Common myeloid progenitor, CD34-positive (primary cell): ENCODE measurements at regions of chr19 and their contacts with region 1.

Region 1: GRCh38 chr19:33771384-33772101 is 25.1 kb upstream of the KCTD15 start:
- DNase-seq: peak; percentile 55 to 78 (median 73)
- H3K4me3 ChIP-seq: no peak overlapping the region
- H3K27ac ChIP-seq: no peak overlapping the region
- H3K4me1 ChIP-seq: no peaks in the 10 kb centered on the region
- H3K27me3 ChIP-seq: peaks cover 0 to 11% (median 5%) of the 10 kb centered on the region in 5 experiments

Region 2: GRCh38 chr19:33235269-33235995 is 536.1 kb before region 1 on chr19:
- CTCF ChIA-PET with region 1: interaction called, 12 read pairs
- POLR2A ChIA-PET with region 1: no interaction called
- DNase-seq: peak; percentile 54 to 69 (median 61)
- H3K4me3 ChIP-seq: no peak overlapping the region
- H3K27ac ChIP-seq: no peak overlapping the region
- H3K4me1 ChIP-seq: no peaks in the 10 kb centered on the region
- H3K27me3 ChIP-seq: peaks cover 0 to 7% (median 0%) of the 10 kb centered on the region in 5 experiments

Region 3: DNA sequence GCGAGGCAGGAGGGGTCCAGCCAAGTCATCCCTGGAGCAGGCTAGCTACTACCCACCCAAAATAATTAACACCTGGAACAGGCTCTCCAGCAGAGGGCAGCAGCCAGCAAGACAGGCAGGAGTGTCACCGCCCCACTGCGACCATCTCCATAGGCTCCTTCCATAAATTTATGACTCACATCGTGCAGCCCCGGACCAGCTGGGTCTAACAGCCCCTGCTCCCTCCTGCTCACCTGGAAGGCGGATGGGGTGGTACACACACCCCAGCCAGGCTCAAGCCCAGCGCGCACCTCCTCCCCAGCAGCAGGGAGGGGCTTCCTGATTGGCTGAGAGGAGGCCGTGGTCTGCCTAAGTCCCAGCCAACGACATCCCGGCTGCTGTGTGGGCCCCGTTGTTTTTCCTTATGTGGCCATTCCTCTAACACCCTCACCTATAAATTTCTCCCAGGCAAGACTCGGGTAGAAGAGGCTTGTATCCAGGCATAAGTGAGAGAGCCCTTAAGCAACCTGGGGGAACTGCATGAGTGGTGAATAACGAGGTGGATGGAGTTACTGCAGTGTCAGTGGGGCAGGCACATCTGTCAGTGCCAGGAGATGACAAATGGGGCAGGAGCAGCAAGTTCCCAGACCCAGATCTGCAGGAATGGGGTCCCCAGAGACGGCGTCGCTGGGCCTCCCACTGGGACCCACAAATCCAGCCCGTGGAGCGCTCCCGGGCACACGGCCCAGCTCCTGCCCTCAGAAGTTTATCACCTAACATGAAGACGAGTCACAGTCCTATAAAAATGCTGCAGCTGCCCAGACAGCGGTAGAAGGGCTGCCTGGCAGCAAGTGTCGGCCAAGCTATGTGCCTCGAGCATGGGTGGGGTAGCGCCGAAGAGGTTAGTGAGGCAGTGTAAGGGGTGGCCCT is 355.0 kb before region 1 on chr19:
- CTCF ChIA-PET with region 1: interaction called, 19 read pairs
- POLR2A ChIA-PET with region 1: no interaction called
- DNase-seq: peak; percentile 73 to 90 (median 88)
- H3K4me3 ChIP-seq: peak overlapping the region in 3 of 7 experiments; percentile 33 to 68 (median 46)
- H3K27ac ChIP-seq: no peak overlapping the region
- H3K4me1 ChIP-seq: peaks cover 0 to 5% (median 4%) of the 10 kb centered on the region in 4 experiments
- H3K27me3 ChIP-seq: no peaks in the 10 kb centered on the region

Region 4: GRCh38 chr19:33430674-33431277 is 340.8 kb before region 1 on chr19:
- CTCF ChIA-PET with region 1: interaction called, 53 read pairs
- POLR2A ChIA-PET with region 1: no interaction called
- DNase-seq: peak; percentile 55 to 82 (median 74)
- H3K4me3 ChIP-seq: no peak overlapping the region
- H3K27ac ChIP-seq: no peak overlapping the region
- H3K4me1 ChIP-seq: no peaks in the 10 kb centered on the region
- H3K27me3 ChIP-seq: no peaks in the 10 kb centered on the region

Region 5: DNA sequence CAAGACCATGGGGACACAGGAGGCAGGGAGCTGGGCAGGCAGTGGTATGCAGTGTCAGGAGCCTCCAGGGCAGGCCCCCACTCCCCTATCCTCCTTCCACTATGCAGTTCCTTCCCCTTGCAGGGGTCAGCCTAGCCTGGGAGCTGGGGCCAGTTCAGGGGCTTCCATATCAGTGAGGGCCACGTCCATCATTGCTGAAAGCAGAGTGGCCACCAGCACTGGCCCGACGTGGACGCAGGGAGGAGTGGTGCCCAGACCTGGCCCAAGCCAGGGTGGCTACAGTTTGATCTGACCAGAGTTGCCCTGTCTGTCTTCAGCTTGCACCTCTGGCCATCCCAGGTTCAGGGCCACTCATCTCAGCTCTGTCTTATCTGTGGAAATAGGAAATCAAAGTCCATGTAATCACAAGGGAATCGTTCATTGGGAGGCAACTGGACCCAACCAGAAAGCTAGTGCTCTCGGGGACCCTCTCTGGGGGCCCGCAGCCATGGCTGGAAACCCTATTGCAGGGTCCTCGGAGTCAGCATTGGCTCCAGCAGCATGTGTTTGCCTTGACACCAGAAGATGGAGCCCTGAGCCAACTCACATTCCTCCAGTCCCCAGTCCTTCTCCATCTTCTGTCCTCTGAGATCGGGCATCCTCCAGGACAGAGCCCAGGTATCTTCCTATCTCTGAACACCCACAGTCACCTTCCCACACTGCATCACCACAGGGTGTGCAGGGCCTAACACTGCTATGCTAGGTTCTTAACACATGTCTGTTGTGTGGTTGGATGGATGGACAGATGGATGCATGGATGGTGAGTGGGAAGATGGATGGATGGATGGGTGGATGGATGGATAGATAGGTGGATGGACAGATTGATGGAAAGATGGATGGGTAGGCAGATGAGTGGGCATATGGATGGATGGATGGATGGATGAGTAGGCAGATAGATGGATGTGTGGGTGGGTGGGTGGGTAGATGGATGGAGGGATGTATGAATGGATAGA is 50.6 kb before region 1 on chr19:
- CTCF ChIA-PET with region 1: no interaction called
- POLR2A ChIA-PET with region 1: no interaction called
- DNase-seq: no peak
- H3K4me3 ChIP-seq: no peak overlapping the region
- H3K27ac ChIP-seq: no peak overlapping the region
- H3K4me1 ChIP-seq: no peaks in the 10 kb centered on the region
- H3K27me3 ChIP-seq: peaks cover 0 to 9% (median 6%) of the 10 kb centered on the region in 5 experiments

Region 6: GRCh38 chr19:33947265-33947964 is 175.9 kb after region 1 on chr19:
- CTCF ChIA-PET with region 1: no interaction called
- POLR2A ChIA-PET with region 1: no interaction called
- DNase-seq: no peak
- H3K4me3 ChIP-seq: no peak overlapping the region
- H3K27ac ChIP-seq: no peak overlapping the region
- H3K4me1 ChIP-seq: no peaks in the 10 kb centered on the region
- H3K27me3 ChIP-seq: peaks cover 0 to 4% (median 0%) of the 10 kb centered on the region in 5 experiments